CD8-positive, alpha-beta memory T cell (primary cell): ENCODE measurements at regions of chr5 and their contacts with region 1.

Region 1: GRCh38 chr5:139293504-139294373 is at the start of gene MATR3:
- DNase-seq: peak; percentile 90 to 95 (median 91)
- H3K4me3 ChIP-seq: peak within 1 kb of the TSS; percentile 78
- H3K4me3 Mint-ChIP-seq: peak within 1 kb of the TSS; percentile 93 to 99 (median 98)
- H3K27ac ChIP-seq: peak within 1 kb of the TSS; percentile 97
- H3K27ac Mint-ChIP-seq: peak within 1 kb of the TSS; percentile 68 to 99 (median 98)
- H3K4me1 ChIP-seq: peaks cover 38% of the 10 kb centered on the region
- H3K4me1 Mint-ChIP-seq: peaks cover 39 to 50% (median 49%) of the 10 kb centered on the region in 3 donors
- H3K27me3 ChIP-seq: no peaks in the 10 kb centered on the region
- H3K27me3 Mint-ChIP-seq: peaks cover 0 to 5% of the 10 kb centered on the region in 2 donors
- total RNA-seq, gene MATR3: 184 to 199 TPM

Region 2: GRCh38 chr5:138575194-138576015 is 718.3 kb before region 1 on chr5 and contains the start of gene HSPA9:
- CTCF ChIA-PET with region 1: interaction called, 3 read pairs
- POLR2A ChIA-PET with region 1: interaction called, 12 read pairs
- DNase-seq: peak; percentile 93 to 98 (median 98)
- H3K4me3 ChIP-seq: peak within 1 kb of the TSS; percentile 97
- H3K4me3 Mint-ChIP-seq: peak within 1 kb of the TSS; percentile 86 to 98 (median 98)
- H3K27ac ChIP-seq: peak within 1 kb of the TSS; percentile 100
- H3K27ac Mint-ChIP-seq: peak within 1 kb of the TSS; percentile 100
- H3K4me1 ChIP-seq: peaks cover 29% of the 10 kb centered on the region
- H3K4me1 Mint-ChIP-seq: peaks cover 28 to 50% (median 34%) of the 10 kb centered on the region in 3 donors
- H3K27me3 ChIP-seq: no peaks in the 10 kb centered on the region
- H3K27me3 Mint-ChIP-seq: peaks cover 0 to 5% of the 10 kb centered on the region in 2 donors
- total RNA-seq, gene HSPA9: 468 to 498 TPM

Region 3: DNA sequence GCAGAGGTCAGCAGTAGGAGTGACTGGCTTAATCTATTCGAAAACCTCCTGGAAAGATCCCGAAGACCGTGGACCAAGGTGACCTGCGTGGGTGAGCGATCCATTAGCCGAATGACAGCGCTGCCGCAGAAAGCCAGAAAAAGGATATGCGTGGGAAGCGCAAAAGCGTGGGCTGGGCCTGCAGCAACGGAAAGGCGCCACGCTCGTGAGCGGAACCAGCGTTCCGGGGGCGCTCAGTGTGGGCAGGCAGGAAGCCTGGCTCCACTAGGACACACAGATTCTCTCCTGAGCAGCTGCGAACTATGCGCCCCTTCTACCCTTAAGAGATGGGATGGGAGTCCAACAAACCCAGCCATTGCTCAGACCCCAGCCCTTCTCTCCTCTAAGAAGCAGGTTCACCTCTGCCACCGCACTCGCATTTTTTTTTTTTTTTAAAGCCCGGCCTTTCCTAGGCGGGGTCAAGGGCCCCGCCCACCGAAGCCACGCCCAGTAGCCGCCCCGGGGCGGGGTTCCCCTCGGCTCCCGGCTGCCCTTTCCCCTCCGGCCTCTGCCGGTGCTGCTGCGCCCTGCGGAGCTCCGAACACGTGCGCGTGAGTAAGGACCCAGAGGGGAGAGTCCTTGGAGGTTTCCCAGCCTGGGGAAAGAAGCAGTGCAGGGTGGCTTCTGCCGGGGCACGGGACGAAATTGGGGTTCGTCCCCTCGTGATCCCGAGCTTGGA is 20.0 kb before region 1 on chr5:
- CTCF ChIA-PET with region 1: interaction called, 6 read pairs
- POLR2A ChIA-PET with region 1: interaction called, 24 read pairs
- DNase-seq: peak; percentile 80 to 89 (median 86)
- H3K4me3 ChIP-seq: peak overlapping the region; percentile 89
- H3K4me3 Mint-ChIP-seq: peak overlapping the region; percentile 83 to 94 (median 89)
- H3K27ac ChIP-seq: peak overlapping the region; percentile 67
- H3K27ac Mint-ChIP-seq: peak overlapping the region; percentile 51 to 94 (median 78)
- H3K4me1 ChIP-seq: peaks cover 47% of the 10 kb centered on the region
- H3K4me1 Mint-ChIP-seq: peaks cover 48 to 62% (median 54%) of the 10 kb centered on the region in 3 donors
- H3K27me3 ChIP-seq: no peaks in the 10 kb centered on the region
- H3K27me3 Mint-ChIP-seq: peaks cover 0 to 3% of the 10 kb centered on the region in 2 donors

Region 4: DNA sequence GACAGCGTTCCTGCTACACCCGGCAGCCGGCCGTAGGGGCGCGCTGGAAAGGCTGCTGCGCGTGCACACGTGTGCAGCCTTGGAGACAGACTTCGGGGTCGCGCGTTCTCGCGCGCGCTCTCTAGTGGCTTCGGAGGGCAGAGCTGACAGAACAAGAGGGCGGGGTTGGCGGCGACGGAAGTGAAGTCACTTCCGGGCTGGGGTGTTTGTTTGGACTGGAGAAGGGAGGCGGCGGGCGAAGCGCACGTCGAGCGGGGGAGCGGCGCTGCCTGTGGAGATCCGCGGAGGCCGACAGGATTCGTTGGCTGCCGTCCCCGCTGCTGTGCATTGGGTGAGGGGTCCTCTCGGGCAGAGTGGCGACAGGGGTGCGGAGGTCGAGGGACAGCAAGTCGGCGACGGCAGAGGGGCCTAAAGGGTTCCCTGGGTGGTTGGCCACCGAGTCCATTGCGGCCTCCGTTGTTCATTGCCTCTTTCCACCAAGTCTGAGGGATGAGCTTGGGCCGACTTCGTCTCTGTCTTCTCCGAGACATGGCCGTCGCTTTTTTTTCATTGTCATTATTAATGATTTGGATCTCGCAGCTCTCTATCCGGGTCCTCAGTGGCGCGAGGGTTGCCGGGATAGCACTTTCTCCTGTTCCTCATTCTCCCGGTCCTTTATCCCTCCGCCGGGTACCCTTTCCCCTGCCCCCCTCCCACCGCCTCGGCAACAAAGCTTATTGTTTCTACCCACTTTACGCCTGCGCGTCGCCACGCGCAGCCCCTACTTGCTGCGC is 48.1 kb after region 1 on chr5 and contains the start of gene PAIP2:
- CTCF ChIA-PET with region 1: interaction called, 7 read pairs
- POLR2A ChIA-PET with region 1: interaction called, 68 read pairs
- DNase-seq: peak; percentile 96 to 98 (median 97)
- H3K4me3 ChIP-seq: peak within 1 kb of the TSS; percentile 87
- H3K4me3 Mint-ChIP-seq: peak within 1 kb of the TSS; percentile 93 to 100 (median 97)
- H3K27ac ChIP-seq: peak within 1 kb of the TSS; percentile 99
- H3K27ac Mint-ChIP-seq: peak within 1 kb of the TSS; percentile 98 to 100 (median 98)
- H3K4me1 ChIP-seq: peaks cover 36% of the 10 kb centered on the region
- H3K4me1 Mint-ChIP-seq: peaks cover 43 to 61% (median 53%) of the 10 kb centered on the region in 3 donors
- H3K27me3 ChIP-seq: no peaks in the 10 kb centered on the region
- H3K27me3 Mint-ChIP-seq: no peaks in the 10 kb centered on the region
- total RNA-seq, gene PAIP2: 67.9 to 77.0 TPM